ENCODE measurements at regions of chr5 and their contacts with region 1.

Region 1: DNA sequence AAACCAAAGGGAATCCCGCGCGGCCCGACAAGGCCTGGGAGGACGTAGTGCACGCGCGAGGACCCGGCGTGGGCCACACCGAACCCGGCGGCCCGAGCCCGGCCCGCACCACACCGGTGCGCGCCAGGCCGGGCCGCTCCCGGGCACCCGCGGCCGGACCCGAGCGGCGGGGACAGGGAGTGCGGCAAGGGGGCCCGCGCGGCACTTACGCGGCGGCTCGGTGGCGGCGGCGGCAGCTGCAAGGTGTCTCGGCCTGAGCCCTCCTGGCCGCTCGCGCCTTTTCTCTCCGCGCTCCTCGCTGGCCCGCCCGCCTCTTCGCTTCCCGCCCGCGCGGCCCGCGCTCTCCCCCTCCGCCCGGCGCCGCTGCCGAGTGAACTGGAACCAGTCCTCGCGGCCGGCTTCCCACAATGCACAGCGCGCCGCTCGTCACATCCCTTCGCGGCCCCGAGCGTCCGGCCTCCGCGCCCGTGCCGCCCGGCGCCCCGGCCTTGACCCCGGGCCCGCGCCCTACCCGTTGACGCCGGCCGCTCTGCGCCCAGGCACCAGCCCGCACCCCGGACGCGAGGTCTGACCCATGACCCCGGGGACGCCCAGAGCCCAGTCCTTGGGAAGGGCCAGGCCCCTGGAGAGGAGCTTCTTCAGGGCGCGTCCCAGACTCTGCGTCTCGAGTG is at the start of gene MACROH2A1:
- DNase-seq: peak; percentile 81
- H3K4me3 Mint-ChIP-seq: peak within 1 kb of the TSS; percentile 95
- H3K27ac Mint-ChIP-seq: peak within 1 kb of the TSS; percentile 96
- H3K4me1 Mint-ChIP-seq: peaks cover 51% of the 10 kb centered on the region
- H3K27me3 Mint-ChIP-seq: peaks cover 8% of the 10 kb centered on the region
- total RNA-seq, gene MACROH2A1: 315 and 317 TPM in 2 replicates

Region 2: GRCh38 chr5:134365604-134366003 is 1033.4 kb before region 1 on chr5:
- intact Hi-C with region 1: loop called (anchors 5 kb)
- DNase-seq: no peak
- H3K4me3 Mint-ChIP-seq: peak overlapping the region; percentile 0
- H3K27ac Mint-ChIP-seq: peak overlapping the region; percentile 2
- H3K4me1 Mint-ChIP-seq: peaks cover 31% of the 10 kb centered on the region
- H3K27me3 Mint-ChIP-seq: no peaks in the 10 kb centered on the region

Region 3: GRCh38 chr5:135135530-135136226 is 263.3 kb before region 1 on chr5:
- intact Hi-C with region 1: no loop called
- DNase-seq: no peak
- H3K4me3 Mint-ChIP-seq: no peak overlapping the region
- H3K27ac Mint-ChIP-seq: no peak overlapping the region
- H3K4me1 Mint-ChIP-seq: no peaks in the 10 kb centered on the region
- H3K27me3 Mint-ChIP-seq: peaks cover 5% of the 10 kb centered on the region

Region 4: DNA sequence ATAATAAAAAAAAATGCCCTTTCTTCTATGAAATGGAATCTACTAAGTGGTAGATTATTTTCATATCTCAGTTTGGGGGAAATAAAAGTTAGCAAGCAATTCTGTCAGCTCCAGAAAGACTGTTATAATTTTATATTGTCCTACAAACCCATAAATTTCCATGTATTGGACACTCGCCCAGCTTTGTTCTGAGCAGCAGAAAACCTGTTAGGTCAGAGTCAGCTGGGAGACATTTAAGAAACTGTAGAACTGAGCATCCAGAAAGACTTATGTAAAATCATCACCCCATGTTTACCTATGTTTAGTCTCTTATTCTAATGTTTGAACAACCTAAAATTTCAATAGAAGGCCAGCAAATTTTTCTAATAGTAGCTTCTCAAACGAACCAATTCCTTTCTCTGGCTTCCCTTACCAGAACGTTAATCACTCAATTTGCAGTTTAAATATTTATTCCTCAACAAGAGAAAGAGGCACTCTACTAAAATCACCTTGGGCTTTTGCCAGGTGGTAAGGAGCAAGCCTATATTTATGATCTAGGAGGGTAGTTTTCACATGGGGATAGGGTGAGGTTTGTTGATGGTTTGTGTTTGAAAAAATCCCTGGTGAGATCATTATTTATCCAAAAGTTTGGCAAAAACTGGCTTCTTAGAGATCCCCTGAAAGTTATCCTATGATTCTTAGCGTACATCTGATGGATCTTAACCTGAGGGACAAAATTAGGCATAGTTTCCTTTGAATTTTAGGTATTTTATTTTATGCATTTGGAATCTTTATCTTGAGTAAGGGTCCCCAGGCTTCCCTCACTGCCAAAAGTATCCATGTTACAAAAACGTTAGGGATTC is 34.3 kb before region 1 on chr5:
- intact Hi-C with region 1: loop called (anchors 5 kb)
- DNase-seq: no peak
- H3K4me3 Mint-ChIP-seq: no peak overlapping the region
- H3K27ac Mint-ChIP-seq: no peak overlapping the region
- H3K4me1 Mint-ChIP-seq: peaks cover 47% of the 10 kb centered on the region
- H3K27me3 Mint-ChIP-seq: no peaks in the 10 kb centered on the region

Region 5: DNA sequence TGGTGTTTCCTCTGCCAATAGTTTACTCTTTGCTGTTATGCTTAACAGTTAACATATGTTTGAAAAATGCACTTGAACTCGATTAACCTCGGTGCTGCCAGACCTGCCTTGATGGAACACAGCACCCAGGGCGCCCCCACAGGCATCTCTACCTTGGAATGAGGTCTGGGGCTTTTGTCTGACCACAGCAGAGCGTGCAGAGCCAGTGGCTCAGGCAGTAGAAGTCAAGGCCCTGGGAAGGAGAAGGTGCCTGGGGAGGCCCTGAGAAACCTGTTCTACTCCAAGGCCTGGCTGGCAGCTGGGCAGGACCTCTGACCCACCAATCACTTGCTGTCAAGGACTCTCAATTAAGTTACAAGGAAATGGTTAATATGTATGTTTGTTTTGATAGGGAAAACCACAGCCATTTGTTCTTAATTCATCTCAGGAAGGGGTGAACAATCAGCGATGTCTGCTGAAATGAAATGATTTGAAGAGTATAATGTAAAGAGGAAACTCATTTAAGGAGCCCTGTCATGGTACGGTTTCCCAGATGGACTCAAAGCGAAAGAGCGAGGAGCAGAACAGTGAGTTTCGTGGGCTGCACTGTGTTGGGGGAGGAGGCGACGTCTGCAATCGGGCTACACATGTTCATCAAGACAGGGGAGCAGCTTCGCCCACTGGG is 21.9 kb before region 1 on chr5:
- intact Hi-C with region 1: loop called (anchors 1 kb)
- DNase-seq: no peak
- H3K4me3 Mint-ChIP-seq: peak overlapping the region; percentile 47
- H3K27ac Mint-ChIP-seq: peak overlapping the region; percentile 86
- H3K4me1 Mint-ChIP-seq: peaks cover 80% of the 10 kb centered on the region
- H3K27me3 Mint-ChIP-seq: no peaks in the 10 kb centered on the region

Region 6: GRCh38 chr5:135426102-135427082 is 27.4 kb after region 1 on chr5:
- intact Hi-C with region 1: loop called (anchors 2 kb)
- DNase-seq: peak; percentile 14
- H3K4me3 Mint-ChIP-seq: no peak overlapping the region
- H3K27ac Mint-ChIP-seq: peak overlapping the region; percentile 36
- H3K4me1 Mint-ChIP-seq: peaks cover 15% of the 10 kb centered on the region
- H3K27me3 Mint-ChIP-seq: peaks cover 7% of the 10 kb centered on the region

Measured in activated T-helper 1 cell treated with anti-CD3 and anti-CD28 coated beads, Interleukin-12 subunit alpha, Interleukin-12 subunit beta, Interleukin-2, Interleukin-4 antibody, amounts not matched to agents 30 ng/mL and 10 ng/mL and 1 ng/mL, durations not matched to agents 14 hours and 24 hours and 36 hours (primary cell).